Sigmoid colon (tissue), 7 donors: ENCODE measurements at regions of chr5 and their contacts with region 1.

Region 1: DNA sequence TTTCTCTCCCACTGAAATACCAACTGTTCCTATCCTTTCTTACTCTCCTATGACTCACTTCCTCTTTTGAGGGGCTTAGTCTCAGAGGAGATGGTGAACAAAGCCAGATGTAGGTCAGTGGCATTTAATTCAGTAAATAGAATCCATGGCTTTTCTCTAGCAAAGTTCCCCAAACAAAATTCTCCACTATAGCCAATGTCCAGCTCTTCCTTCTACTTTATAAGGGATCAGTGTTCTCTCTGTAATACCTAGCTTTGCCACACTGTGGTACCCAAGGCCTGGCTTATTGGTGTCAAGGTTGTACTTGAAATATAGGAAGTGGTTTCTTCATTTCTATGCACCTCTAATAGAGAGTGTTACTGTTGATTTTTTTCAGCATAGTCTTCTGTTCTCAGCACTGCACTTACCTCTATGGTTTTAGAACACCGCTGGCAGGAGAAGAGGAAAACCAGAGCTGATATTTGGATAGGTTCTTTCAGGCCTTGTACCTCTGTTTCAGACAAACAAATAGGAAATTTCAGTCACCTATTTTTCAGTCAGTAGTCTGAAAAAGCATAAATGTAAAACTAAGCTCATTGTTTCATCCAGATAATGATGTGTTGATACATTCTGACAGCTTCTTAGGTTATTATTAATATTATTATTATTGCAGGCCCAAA is 40.6 kb upstream of the ITGA2 start:
- DNase-seq: peak; percentile 66
- H3K4me3 ChIP-seq: no peak overlapping the region
- H3K27ac ChIP-seq: peak overlapping the region; percentile 24 to 79 (median 73)
- H3K4me1 ChIP-seq: peaks cover 0 to 74% (median 57%) of the 10 kb centered on the region in 4 donors
- H3K27me3 ChIP-seq: no peaks in the 10 kb centered on the region
- CTCF ChIP-seq: peak; percentile 48 to 82 (median 74)
- EP300 ChIP-seq: no peak
- POLR2A ChIP-seq: no peak

Region 2: GRCh38 chr5:52989781-52990527 is 41.4 kb after region 1 on chr5:
- intact Hi-C with region 1: loop called (anchors 5 kb)
- DNase-seq: peak; percentile 70
- H3K4me3 ChIP-seq: peak overlapping the region; percentile 40 to 63 (median 54)
- H3K27ac ChIP-seq: peak overlapping the region; percentile 12 to 76 (median 44)
- H3K4me1 ChIP-seq: peaks cover 0 to 21% (median 13%) of the 10 kb centered on the region in 4 donors
- H3K27me3 ChIP-seq: peaks cover 0 to 7% (median 0%) of the 10 kb centered on the region in 3 donors
- CTCF ChIP-seq: peak in 1 of 4 experiments; percentile 12
- EP300 ChIP-seq: no peak
- POLR2A ChIP-seq: no peak

Region 3: DNA sequence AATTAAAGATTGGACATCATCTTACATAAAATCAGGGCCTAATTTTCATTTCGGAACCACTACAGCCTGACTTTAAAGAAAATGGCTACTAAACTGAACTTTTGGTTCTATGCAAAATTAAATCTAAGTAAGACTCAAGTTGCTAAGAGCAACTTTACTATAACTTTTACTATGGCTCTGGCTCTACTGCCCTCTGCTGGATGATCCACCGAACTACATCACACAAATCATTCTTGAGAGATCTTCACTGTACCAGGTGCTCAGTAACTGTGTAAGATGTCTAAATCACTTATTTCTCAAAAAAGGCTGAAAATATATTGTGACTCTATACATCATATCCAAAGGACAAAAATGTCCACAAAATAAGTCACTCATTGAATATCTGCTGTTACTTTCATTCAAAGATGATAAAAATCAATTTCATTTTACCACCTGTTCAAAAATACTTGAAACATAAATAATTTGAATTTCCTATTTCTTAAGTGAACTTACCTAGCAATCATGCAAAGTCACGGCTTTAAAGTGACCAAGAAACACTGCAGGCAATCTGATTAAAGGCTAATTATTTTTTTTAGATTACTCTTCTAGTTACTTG is 147.5 kb after region 1 on chr5:
- intact Hi-C with region 1: loop called (anchors 1 kb)
- DNase-seq: peak; percentile 81
- H3K4me3 ChIP-seq: no peak overlapping the region
- H3K27ac ChIP-seq: peak overlapping the region in 1 of 4 donors; percentile 0
- H3K4me1 ChIP-seq: peaks cover 0 to 27% (median 7%) of the 10 kb centered on the region in 4 donors
- H3K27me3 ChIP-seq: no peaks in the 10 kb centered on the region
- CTCF ChIP-seq: peak; percentile 60 to 86 (median 79)
- EP300 ChIP-seq: no peak
- POLR2A ChIP-seq: no peak

Region 4: DNA sequence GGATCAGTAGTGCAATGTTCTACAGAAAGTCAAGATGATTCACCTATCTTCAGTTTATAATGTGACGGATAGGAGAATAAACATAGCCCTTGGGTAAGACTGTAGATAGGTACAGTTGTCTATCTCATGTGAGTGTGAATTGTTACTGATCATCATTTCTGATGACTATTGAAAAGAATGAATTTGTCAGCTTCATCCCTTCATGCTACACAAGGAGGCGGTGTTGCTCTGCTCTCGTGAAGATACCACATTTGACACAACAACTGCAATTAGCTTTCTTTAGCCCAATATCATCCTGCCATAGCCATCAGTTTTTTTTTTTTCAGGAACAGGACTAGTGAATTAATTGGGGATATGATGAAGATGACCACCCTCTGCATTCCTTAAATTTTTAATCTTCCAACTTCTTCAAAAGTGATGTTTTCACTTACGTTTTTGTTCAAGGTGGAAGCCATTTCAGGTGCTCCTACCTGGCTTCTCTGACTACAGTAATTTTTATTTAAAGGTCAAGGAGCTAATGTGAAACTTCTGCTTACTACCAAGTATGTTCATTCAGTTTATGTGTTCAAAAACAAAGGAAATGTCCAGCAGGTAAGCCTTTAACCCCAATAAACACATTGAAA is 313.9 kb after region 1 on chr5:
- intact Hi-C with region 1: no loop called
- DNase-seq: no peak
- H3K4me3 ChIP-seq: no peak overlapping the region
- H3K27ac ChIP-seq: no peak overlapping the region
- H3K4me1 ChIP-seq: no peaks in the 10 kb centered on the region
- H3K27me3 ChIP-seq: no peaks in the 10 kb centered on the region
- CTCF ChIP-seq: no peak
- EP300 ChIP-seq: no peak
- POLR2A ChIP-seq: no peak

Region 5: GRCh38 chr5:53478411-53479044 is 530.0 kb after region 1 on chr5:
- intact Hi-C with region 1: no loop called
- DNase-seq: no peak
- H3K4me3 ChIP-seq: peak overlapping the region; percentile 23 to 81 (median 62)
- H3K27ac ChIP-seq: peak overlapping the region in 2 of 4 donors; percentile 12 to 77
- H3K4me1 ChIP-seq: peaks cover 0 to 30% (median 22%) of the 10 kb centered on the region in 4 donors
- H3K27me3 ChIP-seq: no peaks in the 10 kb centered on the region
- CTCF ChIP-seq: peak in 3 of 4 experiments; percentile 36 to 40 (median 40)
- EP300 ChIP-seq: no peak
- POLR2A ChIP-seq: no peak